PC-9 (cell line): ENCODE measurements at regions of chrX and their contacts with region 1.

Region 1: GRCh38 chrX:132631579-132632232 is 142.9 kb upstream of the MBNL3 start:
- DNase-seq: peak; percentile 5 to 36
- H3K4me3 ChIP-seq: no peak overlapping the region
- H3K27ac ChIP-seq: no peak overlapping the region
- H3K4me1 ChIP-seq: no peaks in the 10 kb centered on the region
- H3K27me3 ChIP-seq: no peaks in the 10 kb centered on the region
- CTCF ChIP-seq: peak; percentile 76

Region 2: DNA sequence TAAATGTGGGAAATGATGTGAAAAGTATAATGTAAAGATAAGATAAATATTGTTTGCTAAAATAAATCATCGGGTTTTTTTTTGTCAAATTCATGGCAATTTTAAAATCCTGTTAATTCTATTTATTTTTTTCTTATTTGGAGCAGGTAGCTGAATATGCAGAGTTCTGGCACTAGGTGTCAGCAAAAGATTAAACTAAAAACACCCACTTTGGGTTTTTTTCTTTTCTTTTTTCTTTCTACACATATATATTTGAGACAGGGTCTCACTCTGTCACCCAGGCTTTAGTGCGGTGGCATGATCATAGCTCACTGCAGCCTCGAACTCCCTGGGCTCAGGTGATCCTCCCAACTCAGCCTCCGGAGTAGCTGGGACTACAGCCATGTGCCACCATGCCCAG is 405.5 kb before region 1 on chrX:
- CTCF ChIA-PET with region 1: interaction called, 12 read pairs
- POLR2A ChIA-PET with region 1: no interaction called
- intact Hi-C with region 1: loop called (anchors 1 kb)
- DNase-seq: no peak
- H3K4me3 ChIP-seq: no peak overlapping the region
- H3K27ac ChIP-seq: no peak overlapping the region
- H3K4me1 ChIP-seq: peaks cover 22% of the 10 kb centered on the region
- H3K27me3 ChIP-seq: no peaks in the 10 kb centered on the region
- CTCF ChIP-seq: peak; percentile 80

Region 3: DNA sequence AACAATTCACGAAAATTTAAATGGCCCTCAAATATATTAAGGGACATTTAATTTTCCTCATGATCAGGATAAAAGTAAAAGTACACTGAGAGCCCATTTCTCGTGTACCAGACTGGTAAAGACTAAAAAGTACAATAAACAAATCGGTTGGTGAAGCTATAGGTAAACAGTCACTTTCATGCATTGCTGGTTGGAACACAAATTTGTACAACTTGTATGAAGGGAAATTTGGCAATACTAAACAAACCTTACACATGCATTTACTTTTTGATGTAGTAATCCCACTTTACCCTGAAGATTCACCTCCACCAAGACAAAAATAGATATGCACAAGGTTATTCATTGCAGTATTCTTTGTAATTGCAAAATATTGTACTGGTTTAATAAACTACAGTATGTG is 111.5 kb before region 1 on chrX:
- CTCF ChIA-PET with region 1: no interaction called
- POLR2A ChIA-PET with region 1: no interaction called
- intact Hi-C with region 1: no loop called
- DNase-seq: no peak
- H3K4me3 ChIP-seq: no peak overlapping the region
- H3K27ac ChIP-seq: no peak overlapping the region
- H3K4me1 ChIP-seq: no peaks in the 10 kb centered on the region
- H3K27me3 ChIP-seq: no peaks in the 10 kb centered on the region
- CTCF ChIP-seq: no peak